ENCODE measurements at regions of chr3 and their contacts with region 1.

Region 1: GRCh38 chr3:42539869-42540714 is 37.6 kb downstream of the VIPR1 start:
- DNase-seq: peak; percentile 78

Region 2: GRCh38 chr3:42229942-42230688 is 310.0 kb before region 1 on chr3:
- intact Hi-C with region 1: loop called (anchors 5 kb)
- DNase-seq: no peak

Region 3: GRCh38 chr3:42247576-42248027 is 292.5 kb before region 1 on chr3:
- intact Hi-C with region 1: loop called (anchors 5 kb)
- DNase-seq: no peak

Region 4: DNA sequence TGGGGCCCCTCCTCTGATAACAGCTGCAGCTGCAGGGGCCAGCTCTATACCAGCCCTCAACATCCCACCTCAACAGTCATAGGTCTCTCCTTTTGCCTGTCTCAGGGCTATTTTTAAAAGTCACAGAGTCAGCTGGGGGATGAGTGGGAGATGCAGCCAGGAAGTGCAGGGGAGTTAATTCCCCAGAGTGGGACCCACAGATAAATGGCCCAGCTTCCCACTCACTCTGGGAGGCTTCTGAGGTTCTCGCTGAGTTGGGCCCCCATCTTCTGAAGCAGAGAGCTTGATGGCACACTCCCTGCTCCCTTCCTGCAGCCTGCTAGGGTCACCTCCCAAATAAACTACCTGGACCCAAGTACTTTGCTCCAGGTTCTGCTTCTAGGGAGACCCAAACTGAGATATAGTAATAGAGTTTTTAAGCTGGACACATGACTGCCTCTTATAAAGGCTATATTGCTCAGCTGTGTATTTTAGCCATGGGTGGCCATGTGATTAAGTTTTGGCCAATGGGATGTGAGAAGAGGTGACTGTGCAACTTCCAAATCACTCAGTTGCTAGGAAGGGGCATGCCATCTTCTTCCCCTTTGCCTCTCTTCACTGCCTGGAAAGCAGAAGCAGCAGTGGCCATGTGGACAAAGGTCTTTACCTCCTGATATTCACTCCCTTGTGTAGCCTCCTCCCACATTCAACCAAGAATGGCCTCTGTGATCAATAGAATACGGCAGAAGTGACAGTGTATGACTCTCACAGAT is 53.1 kb before region 1 on chr3:
- intact Hi-C with region 1: no loop called
- DNase-seq: peak; percentile 58

Region 5: GRCh38 chr3:42501681-42502428 is 38.2 kb before region 1 on chr3:
- intact Hi-C with region 1: loop called (anchors 2 kb)
- DNase-seq: peak; percentile 79